ENCODE measurements at regions of chr17 and their contacts with region 1.

Region 1: DNA sequence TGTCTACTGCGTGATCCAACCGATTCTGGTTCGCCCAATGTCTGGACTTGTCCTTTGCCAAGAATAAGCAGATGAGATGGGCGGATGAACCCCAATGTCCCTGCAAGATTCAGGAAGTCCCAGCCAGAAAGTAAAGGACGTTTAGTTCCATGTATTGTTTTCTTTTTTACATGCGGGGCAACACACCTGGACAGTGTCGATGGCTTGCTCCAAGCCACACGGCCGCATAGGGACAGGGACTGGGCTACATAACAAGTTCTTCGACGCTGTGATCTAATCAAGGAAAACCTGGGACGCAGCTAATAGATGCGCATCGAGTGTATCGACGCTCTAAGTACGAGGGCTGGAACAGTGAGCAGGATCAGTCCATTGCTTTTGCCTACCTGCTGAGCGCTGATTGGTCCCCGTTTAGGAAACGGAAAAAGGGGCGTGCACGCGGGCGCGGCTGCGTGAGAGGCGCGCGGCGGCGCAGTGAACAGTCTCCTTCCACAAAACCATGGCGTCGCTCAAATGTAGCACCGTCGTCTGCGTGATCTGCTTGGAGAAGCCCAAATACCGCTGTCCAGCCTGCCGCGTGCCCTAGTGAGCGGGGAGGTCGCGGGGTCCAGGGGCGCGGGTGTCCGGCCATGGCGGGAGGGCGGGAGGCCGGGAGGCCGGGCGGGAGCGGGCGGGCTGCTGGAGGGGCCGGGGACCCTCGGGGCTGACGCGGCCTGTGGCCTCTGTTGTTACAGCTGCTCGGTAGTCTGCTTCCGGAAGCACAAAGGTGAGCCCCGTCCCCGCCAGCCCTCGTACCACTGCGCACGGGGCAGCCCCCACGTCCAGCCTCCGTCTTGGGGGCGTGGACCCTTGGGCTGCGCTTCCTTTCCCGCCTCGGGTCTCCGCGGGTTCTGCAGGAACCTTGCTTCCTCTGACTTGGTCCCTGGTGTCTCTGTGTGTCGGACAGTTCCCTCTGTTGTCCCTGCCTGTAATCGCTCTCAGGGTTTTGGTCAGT is at the start of gene ZNHIT3:
- DNase-seq: peak; percentile 95
- ATAC-seq: peak; percentile 94
- H3K4me3 Mint-ChIP-seq: peak within 1 kb of the TSS; percentile 84
- H3K27ac Mint-ChIP-seq: peak within 1 kb of the TSS; percentile 96
- H3K4me1 Mint-ChIP-seq: peaks cover 50% of the 10 kb centered on the region
- H3K27me3 Mint-ChIP-seq: peaks cover 10% of the 10 kb centered on the region
- total RNA-seq, gene ZNHIT3: 38.2 to 42.3 TPM

Region 2: GRCh38 chr17:34961093-34961911 is 1525.2 kb before region 1 on chr17 and contains the starts of genes CCT6B and ZNF830:
- CTCF ChIA-PET with region 1: no interaction called
- POLR2A ChIA-PET with region 1: no interaction called
- intact Hi-C with region 1: loop called in 1 of 2 experiments (anchors 2 kb)
- DNase-seq: peak; percentile 95
- ATAC-seq: peak; percentile 91
- H3K4me3 Mint-ChIP-seq: peak within 1 kb of the TSS; percentile 99
- H3K27ac Mint-ChIP-seq: peak within 1 kb of the TSS; percentile 100
- H3K4me1 Mint-ChIP-seq: peaks cover 26% of the 10 kb centered on the region
- H3K27me3 Mint-ChIP-seq: no peaks in the 10 kb centered on the region
- total RNA-seq, gene CCT6B: 0.95 to 1.6 TPM
- total RNA-seq, gene ZNF830: 20.0 TPM

Region 3: DNA sequence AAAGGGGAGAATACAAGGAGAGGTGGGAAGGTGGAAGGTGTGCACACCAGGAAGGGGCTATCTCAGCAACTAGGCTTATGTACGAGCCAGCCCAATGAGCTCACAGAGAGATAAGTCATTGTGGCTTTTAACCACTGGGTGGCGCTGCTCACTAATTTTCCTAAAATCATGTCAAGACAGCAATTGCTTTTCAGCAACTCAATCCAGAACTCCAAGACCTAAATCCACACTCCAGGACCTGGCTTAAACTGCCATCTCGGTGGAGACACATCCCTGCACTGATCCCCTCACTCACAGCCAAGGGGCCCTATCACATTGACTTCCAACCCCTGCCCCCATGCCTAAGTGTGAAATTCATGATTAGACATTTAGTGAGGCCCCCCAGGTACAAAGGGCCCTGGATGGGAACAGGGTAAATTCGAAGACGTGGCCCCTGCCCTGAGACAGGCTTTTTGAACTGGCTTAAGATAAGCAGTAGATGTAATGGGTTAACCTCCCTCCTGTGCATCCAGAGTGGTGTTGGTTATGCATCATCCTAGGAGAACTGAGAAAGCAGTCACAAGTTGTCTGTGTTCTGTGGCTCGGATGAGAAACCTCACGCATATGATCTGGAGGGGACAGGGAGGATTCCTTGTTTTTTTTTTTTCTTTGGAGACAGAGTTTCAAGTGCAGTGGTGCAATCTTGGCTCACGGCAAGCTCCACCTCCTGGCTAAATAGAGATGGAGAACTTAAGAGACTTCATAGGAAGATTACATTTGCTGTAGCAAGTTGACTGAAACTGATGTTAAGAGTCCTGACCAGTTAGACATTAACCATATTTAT is 516.7 kb before region 1 on chr17:
- CTCF ChIA-PET with region 1: interaction called, 11 read pairs
- POLR2A ChIA-PET with region 1: no interaction called
- intact Hi-C with region 1: loop called (anchors 1 to 2 kb)
- DNase-seq: peak; percentile 86
- ATAC-seq: peak; percentile 79
- H3K4me3 Mint-ChIP-seq: no peak overlapping the region
- H3K27ac Mint-ChIP-seq: no peak overlapping the region
- H3K4me1 Mint-ChIP-seq: no peaks in the 10 kb centered on the region
- H3K27me3 Mint-ChIP-seq: no peaks in the 10 kb centered on the region

Region 4: DNA sequence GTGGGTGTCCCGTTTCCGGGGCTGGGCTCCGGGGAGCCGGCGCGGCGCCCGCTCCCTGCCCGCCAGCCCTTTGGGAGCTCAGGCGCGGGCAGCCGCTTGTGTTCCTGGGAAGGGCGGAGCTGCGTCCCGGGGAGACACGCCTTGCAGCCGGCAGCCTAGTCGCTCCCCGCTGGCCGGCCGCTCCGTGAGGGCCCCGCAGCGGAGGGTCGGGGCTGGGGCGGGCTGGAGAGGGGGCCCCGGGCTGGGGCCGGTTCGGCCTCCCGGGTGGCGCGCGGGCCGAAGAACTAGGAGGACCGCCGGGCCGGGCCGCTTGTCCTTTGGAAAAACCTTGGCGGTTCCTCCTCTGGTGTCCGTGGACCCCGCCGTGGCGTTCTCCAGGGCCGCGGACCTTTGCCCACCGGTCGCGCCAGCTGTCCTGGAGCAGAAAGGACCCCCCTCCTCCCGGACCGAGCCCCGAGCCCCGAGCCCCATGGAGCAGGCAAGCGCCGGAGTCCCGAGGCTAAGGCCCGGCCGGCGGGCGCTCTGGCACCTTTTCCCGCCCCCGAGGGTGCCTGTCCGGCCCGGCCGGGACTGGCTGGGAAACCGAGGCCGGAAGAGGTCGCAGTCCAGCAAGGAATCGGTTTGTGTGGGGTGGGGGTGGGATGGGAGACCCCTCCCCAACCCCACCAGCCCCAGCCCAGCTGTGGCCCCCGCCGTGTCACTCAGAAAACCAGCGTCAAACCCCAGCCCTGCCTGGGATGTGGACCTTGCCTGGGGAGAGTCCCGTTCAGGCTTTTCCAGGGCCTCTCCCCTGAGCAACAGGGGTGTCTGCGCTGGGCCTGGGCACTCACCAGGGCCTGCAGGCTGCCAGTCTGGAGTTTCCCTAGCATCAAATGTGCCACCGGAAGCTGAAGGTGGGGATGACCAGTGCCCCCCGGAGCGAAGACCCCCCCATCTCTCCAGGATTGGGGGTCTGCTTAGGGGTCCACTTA is 303.2 kb before region 1 on chr17:
- CTCF ChIA-PET with region 1: no interaction called
- POLR2A ChIA-PET with region 1: no interaction called
- intact Hi-C with region 1: no loop called
- DNase-seq: no peak
- ATAC-seq: no peak
- H3K4me3 Mint-ChIP-seq: no peak overlapping the region
- H3K27ac Mint-ChIP-seq: no peak overlapping the region
- H3K4me1 Mint-ChIP-seq: no peaks in the 10 kb centered on the region
- H3K27me3 Mint-ChIP-seq: peaks cover 13% of the 10 kb centered on the region

Region 5: DNA sequence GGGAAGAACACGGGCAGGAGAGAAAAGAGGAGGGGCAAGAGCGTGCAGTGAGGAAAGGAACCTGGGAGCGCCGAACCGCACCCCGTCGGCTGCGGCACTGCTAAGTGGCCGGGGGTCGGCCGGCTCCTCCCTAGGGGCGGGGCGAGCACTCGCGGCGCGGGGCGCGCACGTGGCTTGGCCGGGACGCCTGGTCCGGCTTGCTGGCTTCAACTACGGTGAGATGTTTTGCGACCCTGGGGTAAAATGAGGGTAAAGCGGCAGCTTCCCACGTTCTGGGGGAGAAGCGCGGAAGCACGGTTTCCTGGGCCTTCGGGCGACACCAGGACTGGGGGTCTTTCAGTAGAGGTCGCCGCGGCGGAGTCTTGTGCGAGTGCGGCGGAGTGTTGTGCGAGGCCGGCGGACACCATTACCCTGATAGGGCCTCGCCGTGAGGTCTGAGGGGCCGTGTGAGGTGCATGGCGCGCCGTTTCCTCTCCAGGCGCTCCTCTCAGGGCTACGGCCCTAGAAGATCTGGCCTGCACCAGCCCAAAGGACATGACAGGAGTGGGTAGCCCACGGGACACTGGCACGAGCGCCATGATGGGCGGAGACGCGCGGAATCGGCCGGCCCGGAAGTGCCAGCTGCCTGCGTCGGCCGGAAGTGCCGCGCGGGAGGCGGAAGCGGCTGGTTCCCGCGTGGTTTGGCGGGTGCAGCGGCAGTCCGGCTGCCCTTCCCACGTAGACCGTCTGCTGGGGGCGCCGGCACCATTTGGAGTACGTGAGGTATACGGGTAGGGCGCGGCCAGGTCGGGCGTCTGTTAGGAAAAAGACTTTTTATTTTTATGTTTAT is 48.6 kb after region 1 on chr17 and contains the starts of genes MYO19 and PIGW:
- CTCF ChIA-PET with region 1: interaction called, 4 read pairs
- POLR2A ChIA-PET with region 1: no interaction called
- intact Hi-C with region 1: loop called (anchors 1 kb)
- DNase-seq: peak; percentile 91
- ATAC-seq: peak; percentile 84
- H3K4me3 Mint-ChIP-seq: peak within 1 kb of the TSS; percentile 98
- H3K27ac Mint-ChIP-seq: peak within 1 kb of the TSS; percentile 99
- H3K4me1 Mint-ChIP-seq: peaks cover 39% of the 10 kb centered on the region
- H3K27me3 Mint-ChIP-seq: no peaks in the 10 kb centered on the region
- total RNA-seq, gene MYO19: 110 to 127 TPM
- total RNA-seq, gene PIGW: 11.8 to 13.4 TPM

Region 6: DNA sequence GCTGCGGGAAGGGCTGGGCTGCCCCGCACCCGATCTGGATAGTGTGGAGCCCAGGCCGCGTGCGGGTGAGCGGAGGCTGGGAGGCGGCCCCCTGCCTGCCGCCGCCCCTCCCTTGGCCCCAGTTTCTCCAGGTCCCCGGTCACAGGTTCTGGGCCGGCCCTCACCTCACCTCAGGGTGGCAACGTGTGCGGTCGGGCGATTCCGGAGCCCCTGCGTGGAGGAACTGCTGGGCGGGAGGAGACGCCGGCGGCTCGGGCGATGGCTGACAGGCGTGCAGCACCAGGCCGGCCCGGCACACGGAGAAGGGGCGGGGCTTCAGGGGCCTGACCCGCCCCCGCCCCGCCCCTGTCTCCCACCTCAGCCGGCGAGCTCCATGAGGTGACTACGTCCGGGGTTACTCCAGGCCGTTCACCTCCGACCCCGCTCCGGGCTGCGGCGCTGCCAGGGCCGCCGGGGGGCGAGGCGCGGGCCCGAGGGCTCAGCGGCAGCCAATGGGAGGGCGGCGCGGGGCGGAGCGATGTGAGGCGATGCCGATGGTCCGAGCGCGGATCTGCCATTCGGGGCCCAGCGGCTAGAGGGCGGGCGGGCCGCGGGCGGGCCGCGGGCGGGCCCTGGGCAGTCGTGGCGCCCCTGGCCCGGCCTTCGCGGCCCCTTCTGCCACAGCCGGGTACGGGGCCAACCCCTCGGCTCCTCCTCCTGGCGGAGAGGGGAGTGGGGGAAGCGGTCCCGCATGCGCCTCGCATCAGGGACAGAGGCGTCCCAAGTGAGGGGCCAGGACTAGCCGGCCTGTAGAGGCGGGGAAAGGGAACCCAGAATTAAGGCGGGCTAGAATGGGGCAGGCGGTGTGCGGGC is 872.6 kb after region 1 on chr17:
- CTCF ChIA-PET with region 1: no interaction called
- POLR2A ChIA-PET with region 1: interaction called, 3 read pairs
- intact Hi-C with region 1: loop called in 1 of 2 experiments (anchors 2 kb)
- DNase-seq: peak; percentile 96
- ATAC-seq: peak; percentile 98
- H3K4me3 Mint-ChIP-seq: peak overlapping the region; percentile 88
- H3K27ac Mint-ChIP-seq: peak overlapping the region; percentile 83
- H3K4me1 Mint-ChIP-seq: peaks cover 23% of the 10 kb centered on the region
- H3K27me3 Mint-ChIP-seq: no peaks in the 10 kb centered on the region